ENCODE measurements at regions of chr16 and their contacts with region 1.

Region 1: GRCh38 chr16:31142109-31143010 is 6.8 kb upstream of the PRSS8 start:
- DNase-seq: peak; percentile 100
- H3K4me3 Mint-ChIP-seq: peak overlapping the region; percentile 69
- H3K27ac Mint-ChIP-seq: peak overlapping the region; percentile 84
- H3K4me1 Mint-ChIP-seq: peaks cover 13% of the 10 kb centered on the region
- H3K27me3 Mint-ChIP-seq: peaks cover 2% of the 10 kb centered on the region

Region 2: GRCh38 chr16:30813821-30814189 is 328.6 kb before region 1 on chr16:
- CTCF ChIA-PET with region 1: no interaction called
- POLR2A ChIA-PET with region 1: no interaction called
- intact Hi-C with region 1: no loop called
- DNase-seq: no peak
- H3K4me3 Mint-ChIP-seq: peak overlapping the region; percentile 84
- H3K27ac Mint-ChIP-seq: peak overlapping the region; percentile 72
- H3K4me1 Mint-ChIP-seq: peaks cover 11% of the 10 kb centered on the region
- H3K27me3 Mint-ChIP-seq: no peaks in the 10 kb centered on the region

Region 3: GRCh38 chr16:30957456-30958174 is 184.7 kb before region 1 on chr16 and contains the start of gene SETD1A:
- CTCF ChIA-PET with region 1: interaction called, 11 read pairs
- POLR2A ChIA-PET with region 1: interaction called, 3 read pairs
- intact Hi-C with region 1: loop called (anchors 1 kb)
- DNase-seq: peak; percentile 97
- H3K4me3 Mint-ChIP-seq: peak within 1 kb of the TSS; percentile 92
- H3K27ac Mint-ChIP-seq: peak within 1 kb of the TSS; percentile 99
- H3K4me1 Mint-ChIP-seq: peaks cover 26% of the 10 kb centered on the region
- H3K27me3 Mint-ChIP-seq: no peaks in the 10 kb centered on the region
- total RNA-seq, gene SETD1A: 16.4 to 17.4 TPM

Region 4: GRCh38 chr16:31022544-31023251 is 119.7 kb before region 1 on chr16:
- CTCF ChIA-PET with region 1: no interaction called
- POLR2A ChIA-PET with region 1: no interaction called
- intact Hi-C with region 1: no loop called
- DNase-seq: no peak
- H3K4me3 Mint-ChIP-seq: no peak overlapping the region
- H3K27ac Mint-ChIP-seq: no peak overlapping the region
- H3K4me1 Mint-ChIP-seq: no peaks in the 10 kb centered on the region
- H3K27me3 Mint-ChIP-seq: no peaks in the 10 kb centered on the region

Region 5: DNA sequence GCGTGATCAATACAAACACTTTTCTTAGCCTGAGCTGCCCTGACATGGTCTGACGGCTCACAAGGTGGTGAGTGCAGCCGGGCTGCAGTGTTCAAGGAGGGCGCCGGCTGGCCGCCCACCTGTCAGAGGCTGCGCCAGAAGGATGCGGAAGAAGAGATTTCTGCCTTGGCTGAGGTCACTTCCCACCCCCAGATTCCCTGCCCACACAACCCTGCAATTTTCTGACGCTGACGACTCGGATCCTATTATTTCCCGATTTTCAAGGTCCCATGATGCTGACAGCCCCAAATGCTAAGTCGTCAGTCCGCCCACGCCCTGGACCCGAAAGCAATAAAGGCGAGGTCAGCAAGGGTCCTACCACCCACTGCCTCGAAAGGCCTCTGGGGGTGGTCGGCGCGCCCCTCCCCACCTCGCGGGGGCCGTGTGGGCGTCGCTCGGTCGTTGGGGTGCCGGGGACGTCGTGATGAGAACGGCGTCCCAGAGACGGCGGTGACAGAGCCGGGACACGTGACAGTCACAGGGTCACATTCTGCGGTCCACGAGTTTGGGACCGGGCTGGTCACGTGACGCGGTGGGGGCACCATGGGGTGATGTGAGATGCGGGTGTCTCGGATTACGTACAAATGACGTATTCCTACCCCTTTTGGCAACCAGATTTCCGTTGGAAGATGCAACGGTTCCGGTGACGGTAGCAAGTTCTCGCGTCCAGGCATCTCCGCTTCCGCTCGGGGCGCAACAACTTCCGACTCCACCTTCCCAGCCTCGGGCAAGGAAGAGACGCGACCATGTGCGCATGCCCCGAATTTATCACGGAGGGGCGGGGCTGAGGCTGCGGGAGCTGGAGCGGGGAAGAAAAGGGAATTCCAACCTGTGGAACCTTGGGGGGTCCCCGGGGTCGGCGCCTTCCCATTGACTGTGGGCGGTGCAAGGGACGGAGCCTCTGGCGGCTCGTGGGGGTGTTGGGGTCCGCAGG is 109.3 kb before region 1 on chr16 and contains the start of gene STX4:
- CTCF ChIA-PET with region 1: interaction called, 3 read pairs
- POLR2A ChIA-PET with region 1: no interaction called
- intact Hi-C with region 1: loop called (anchors 1 kb)
- DNase-seq: peak; percentile 99
- H3K4me3 Mint-ChIP-seq: peak within 1 kb of the TSS; percentile 95
- H3K27ac Mint-ChIP-seq: peak within 1 kb of the TSS; percentile 93
- H3K4me1 Mint-ChIP-seq: peaks cover 16% of the 10 kb centered on the region
- H3K27me3 Mint-ChIP-seq: no peaks in the 10 kb centered on the region
- total RNA-seq, gene STX4: 46.7 to 46.8 TPM

Region 6: DNA sequence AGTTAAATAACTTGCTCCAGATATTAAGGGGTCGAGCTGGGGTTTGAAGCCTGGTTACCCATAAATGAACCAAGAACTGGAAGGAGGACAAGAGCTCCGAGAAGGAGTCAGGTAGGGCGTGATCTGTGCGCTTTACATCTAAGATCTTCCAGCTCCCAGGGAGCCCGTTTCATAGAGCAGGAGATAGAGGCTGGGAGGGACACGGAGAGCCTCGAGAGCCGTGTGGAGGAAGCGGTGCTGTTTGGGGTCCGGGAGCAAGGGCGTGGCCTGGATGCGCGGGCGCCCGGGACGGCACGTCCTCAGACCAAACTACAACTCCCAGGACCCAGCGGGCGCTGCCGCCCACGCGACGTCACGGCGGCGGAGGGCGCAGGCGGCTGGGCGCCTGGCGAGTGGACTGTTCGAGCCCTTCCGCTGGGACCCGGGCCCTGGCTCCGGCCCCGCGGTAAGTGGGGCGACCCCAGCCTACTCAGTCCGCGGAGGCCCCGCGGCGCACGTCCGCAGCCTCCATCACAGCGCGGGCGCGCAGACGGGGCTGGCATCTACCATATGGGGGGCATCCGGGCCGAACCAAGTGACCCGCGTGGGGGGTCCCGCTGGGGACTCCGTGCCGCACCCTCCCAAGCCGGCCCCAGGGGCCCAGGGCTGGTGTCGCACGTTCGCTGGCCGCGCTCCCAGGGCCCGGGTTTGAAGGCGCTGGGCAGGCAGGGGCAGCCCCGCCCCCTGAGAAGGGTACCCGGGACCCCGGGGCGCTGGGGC is 34.1 kb before region 1 on chr16 and contains the start of gene BCKDK:
- CTCF ChIA-PET with region 1: interaction called, 5 read pairs
- POLR2A ChIA-PET with region 1: interaction called, 3 read pairs
- intact Hi-C with region 1: loop called (anchors 2 kb)
- DNase-seq: peak; percentile 84
- H3K4me3 Mint-ChIP-seq: peak within 1 kb of the TSS; percentile 80
- H3K27ac Mint-ChIP-seq: peak within 1 kb of the TSS; percentile 90
- H3K4me1 Mint-ChIP-seq: peaks cover 18% of the 10 kb centered on the region
- H3K27me3 Mint-ChIP-seq: no peaks in the 10 kb centered on the region
- total RNA-seq, gene BCKDK: 38.5 to 40.5 TPM

Region 7: GRCh38 chr16:31168848-31169247 is 26.5 kb after region 1 on chr16:
- CTCF ChIA-PET with region 1: interaction called, 10 read pairs
- POLR2A ChIA-PET with region 1: no interaction called
- intact Hi-C with region 1: no loop called
- DNase-seq: no peak
- H3K4me3 Mint-ChIP-seq: no peak overlapping the region
- H3K27ac Mint-ChIP-seq: no peak overlapping the region
- H3K4me1 Mint-ChIP-seq: no peaks in the 10 kb centered on the region
- H3K27me3 Mint-ChIP-seq: no peaks in the 10 kb centered on the region

Region 8: DNA sequence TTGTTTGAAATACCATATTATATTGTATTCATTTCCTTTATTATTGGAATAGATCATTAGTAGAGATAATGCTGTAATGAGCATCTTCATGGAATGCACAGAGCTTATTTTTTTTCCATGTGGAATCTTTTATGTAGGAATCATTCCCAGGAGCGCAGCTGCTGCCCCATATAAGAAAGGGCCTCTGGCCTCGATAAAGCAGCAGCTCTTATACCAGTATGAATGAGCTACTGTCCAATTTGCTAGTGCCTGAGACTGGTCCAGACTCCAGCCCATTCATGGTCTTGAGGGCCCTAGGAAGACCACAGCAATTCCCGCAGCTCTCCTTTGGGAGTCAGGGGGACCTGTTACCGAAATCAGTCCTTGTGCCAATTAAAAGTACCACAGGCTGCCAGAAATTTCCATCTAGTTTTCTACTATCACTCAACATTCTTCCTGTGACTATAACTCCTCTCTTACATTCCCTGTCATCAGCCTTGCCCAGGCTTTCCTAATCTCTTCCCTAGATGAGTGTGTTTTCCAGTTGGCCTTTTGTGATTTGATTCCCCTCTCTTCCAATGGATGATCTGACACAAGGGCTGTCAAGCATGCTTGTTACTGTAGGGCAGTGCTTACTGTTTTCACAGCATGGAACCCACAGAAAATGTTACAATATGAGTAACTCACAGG is 298.3 kb after region 1 on chr16:
- CTCF ChIA-PET with region 1: interaction called, 20 read pairs
- POLR2A ChIA-PET with region 1: no interaction called
- intact Hi-C with region 1: no loop called
- DNase-seq: no peak
- H3K4me3 Mint-ChIP-seq: no peak overlapping the region
- H3K27ac Mint-ChIP-seq: no peak overlapping the region
- H3K4me1 Mint-ChIP-seq: peaks cover 17% of the 10 kb centered on the region
- H3K27me3 Mint-ChIP-seq: no peaks in the 10 kb centered on the region

Measured in activated CD4-positive, alpha-beta memory T cell treated with anti-CD3 and anti-CD28 coated beads for 36 hours (primary cell).